ENCODE measurements at regions of chr5 and their contacts with region 1.

Region 1: DNA sequence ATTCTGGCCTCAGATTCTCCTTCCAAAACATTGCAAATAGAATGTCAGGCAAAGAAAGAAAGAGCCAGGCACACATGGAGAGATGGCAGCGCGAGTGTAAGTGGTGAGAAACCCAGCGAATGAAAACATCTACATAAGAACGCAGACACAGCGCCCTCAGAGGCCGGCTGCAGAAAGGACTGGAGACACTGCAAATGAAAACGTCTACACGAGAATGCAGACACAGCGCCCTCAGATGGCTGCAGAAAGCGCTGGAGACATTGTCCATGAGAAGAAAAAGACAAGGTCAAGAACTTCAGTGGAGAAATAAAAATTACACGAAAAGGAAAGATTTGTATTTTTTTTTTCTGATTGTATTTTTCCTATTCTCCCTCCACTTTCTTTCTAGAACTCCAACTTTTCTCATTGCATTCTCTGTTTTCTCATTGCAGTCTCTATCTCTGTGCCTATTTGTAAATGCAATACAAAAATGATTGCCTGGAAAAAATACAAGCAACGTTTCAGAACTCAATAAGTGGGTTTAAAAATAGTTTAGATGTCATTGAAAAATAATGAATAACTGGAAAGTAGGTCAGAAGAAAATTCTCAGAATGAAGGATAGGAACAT is 117.9 kb upstream of the LPCAT1 start:
- DNase-seq: peak; percentile 85 to 90
- ATAC-seq: peak; percentile 65
- H3K4me3 ChIP-seq: no peak overlapping the region
- H3K27ac ChIP-seq: no peak overlapping the region
- H3K4me1 ChIP-seq: no peaks in the 10 kb centered on the region
- H3K27me3 ChIP-seq: peaks cover 0 to 2% of the 10 kb centered on the region in 2 donors

Region 2: DNA sequence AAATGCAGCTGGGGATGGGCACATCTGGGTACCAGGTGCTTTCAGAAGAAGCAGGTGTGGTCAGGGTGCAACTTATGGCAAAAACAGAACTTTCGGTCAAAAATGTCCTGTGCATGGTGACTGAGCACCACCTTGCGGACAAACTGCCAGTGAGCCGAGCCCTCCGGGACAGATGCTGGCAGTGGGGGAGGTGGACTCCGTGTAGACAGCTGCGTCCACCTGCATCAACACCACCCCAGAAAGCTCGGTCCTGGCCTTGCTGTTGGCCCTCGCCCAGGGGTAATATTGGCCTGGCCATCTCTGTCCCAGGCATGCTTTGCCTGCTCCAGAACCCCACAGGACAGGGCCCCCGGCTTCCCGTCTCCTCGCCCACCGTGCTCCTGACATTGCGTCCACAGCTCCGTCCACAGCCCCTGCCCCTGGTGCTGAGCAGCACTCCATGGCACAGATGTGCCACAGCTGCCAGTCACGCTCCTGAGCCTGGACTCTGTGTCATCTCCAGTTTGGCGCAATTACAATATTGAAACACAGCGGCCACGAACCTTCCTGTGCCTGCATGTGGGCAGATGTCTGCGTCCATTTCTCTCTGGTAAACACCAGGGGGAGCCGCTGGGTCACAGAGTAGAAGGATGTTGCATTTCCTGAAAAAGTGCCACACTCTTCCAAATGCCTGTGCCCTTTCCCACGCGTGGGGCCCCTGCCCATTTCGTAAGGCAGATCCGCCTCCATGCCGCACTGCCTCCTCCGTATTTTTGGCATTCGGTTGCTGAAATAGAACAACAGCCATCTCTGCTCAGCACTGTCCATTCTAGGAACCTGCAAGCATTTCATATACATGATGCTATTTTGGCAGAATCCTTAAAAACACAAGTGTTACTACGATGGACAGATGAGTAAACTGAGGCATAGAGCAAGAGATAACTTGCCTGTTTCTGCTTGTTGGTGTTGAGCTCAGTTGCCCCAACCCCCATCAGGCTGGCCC is 473.6 kb before region 1 on chr5:
- intact Hi-C with region 1: loop called (anchors 2 to 5 kb)
- DNase-seq: peak; percentile 75 to 80
- ATAC-seq: peak; percentile 58
- H3K4me3 ChIP-seq: no peak overlapping the region
- H3K27ac ChIP-seq: no peak overlapping the region
- H3K4me1 ChIP-seq: no peaks in the 10 kb centered on the region
- H3K27me3 ChIP-seq: no peaks in the 10 kb centered on the region

Region 3: GRCh38 chr5:1479581-1480188 is 162.0 kb before region 1 on chr5:
- intact Hi-C with region 1: loop called (anchors 5 to 10 kb)
- DNase-seq: peak; percentile 72 to 87
- ATAC-seq: peak; percentile 67
- H3K4me3 ChIP-seq: no peak overlapping the region
- H3K27ac ChIP-seq: no peak overlapping the region
- H3K4me1 ChIP-seq: no peaks in the 10 kb centered on the region
- H3K27me3 ChIP-seq: no peaks in the 10 kb centered on the region

Region 4: DNA sequence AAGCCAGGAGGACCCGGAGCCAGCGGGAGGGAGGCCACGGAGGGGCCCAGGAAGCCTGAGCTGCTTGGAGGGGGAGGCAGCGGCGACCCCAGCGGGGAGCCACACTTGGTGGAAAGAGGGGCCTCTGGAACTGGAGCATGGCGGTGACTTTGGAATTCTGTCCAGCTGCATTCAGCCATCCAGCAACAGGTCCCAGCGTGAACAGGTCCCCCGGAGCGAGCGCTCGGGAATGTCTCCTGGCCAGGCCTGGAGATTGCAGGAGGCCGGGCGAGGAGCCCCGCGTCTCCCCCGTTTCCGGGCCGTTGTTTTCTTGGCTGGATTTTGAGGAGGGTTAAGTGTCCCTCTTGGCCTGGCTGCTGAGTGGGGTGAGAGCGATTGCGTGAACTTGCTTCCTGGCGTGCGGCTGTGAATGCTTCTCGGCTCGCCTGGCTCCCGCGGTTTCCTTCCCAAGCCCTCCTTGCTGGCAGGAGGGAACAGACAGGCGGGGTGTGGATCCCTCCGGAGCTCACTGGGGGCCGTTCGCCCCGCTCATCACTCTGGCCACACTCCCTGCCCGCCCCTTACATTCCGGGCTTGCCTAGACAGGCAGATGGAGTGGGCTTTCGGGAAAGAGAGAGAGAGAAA is 366.3 kb after region 1 on chr5:
- intact Hi-C with region 1: no loop called
- DNase-seq: peak in 1 of 2 donors; percentile 64
- ATAC-seq: peak; percentile 41
- H3K4me3 ChIP-seq: no peak overlapping the region
- H3K27ac ChIP-seq: no peak overlapping the region
- H3K4me1 ChIP-seq: no peaks in the 10 kb centered on the region
- H3K27me3 ChIP-seq: no peaks in the 10 kb centered on the region

Measured in aorta (tissue), 5 donors.